ENCODE measurements at regions of chr6 and their contacts with region 1.

Region 1: DNA sequence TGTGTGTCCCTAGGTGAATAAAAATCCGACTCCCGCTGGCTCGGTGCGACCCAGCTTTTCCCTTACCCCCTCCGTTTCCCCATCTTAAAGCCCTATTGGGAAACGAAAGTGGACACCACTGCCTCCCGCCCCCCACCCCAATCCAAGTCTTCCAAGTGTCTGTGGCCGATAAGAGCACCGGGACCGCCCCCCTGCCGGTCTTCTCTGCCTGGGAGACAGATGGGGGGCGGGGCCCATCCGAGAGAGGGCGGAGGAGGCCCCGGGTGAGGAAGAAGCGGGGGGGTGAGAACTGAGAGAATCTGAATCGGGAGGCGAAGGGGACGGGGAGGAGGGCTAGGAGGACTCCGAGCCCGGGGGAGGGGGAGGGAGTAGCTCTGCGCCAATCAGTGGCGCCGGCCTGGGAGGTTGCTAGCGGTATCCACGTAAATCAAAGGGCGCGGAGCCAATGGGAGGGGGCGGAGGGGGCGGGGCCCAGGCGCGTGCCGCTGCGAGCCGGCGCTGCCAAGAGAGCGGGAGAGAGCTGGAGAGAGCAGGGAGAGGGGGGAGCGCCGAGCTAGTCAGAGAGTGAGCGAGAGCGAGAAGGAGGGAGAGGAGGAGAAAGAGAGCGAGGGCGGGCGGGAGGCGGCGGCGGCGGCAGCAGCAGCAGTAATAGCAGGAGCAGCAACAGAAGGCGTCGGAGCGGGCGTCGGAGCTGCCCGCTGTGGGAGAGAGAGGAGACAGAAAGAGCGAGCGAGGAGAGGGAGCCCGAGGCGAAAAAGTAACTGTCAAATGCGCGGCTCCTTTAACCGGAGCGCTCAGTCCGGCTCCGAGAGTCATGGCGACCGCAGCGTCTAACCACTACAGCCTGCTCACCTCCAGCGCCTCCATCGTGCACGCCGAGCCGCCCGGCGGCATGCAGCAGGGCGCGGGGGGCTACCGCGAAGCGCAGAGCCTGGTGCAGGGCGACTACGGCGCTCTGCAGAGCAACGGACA is at the start of gene POU3F2:
- DNase-seq: peak; percentile 87 to 92 (median 87)
- H3K4me3 ChIP-seq: peak within 1 kb of the TSS; percentile 58
- H3K27ac ChIP-seq: peak within 1 kb of the TSS in 1 of 2 donors; percentile 30
- H3K4me1 ChIP-seq: peaks cover 12% of the 10 kb centered on the region
- H3K27me3 ChIP-seq: peaks cover 6% of the 10 kb centered on the region
- CTCF ChIP-seq: no peak
- EP300 ChIP-seq: no peak
- POLR2A ChIP-seq: no peak
- total RNA-seq, gene POU3F2: not detected

Region 2: DNA sequence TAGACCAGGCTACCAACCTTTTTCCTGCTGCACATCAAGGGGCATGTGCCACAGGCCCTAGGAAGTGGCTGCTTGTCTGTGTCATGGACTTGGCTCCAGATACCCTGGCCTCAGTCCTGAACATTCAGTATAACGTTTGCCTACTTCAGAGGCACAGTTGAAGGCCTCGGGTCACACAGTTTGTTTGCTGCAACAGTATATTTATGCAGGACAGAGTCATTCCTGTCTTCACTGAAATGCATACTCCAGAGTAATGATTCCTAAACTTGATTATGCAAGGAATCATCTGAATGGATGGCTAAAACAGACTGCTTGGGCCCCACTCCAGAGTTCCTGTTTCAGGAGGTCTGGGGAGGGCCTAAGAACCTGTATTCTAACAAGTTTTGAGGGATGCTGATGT is 1760.4 kb before region 1 on chr6:
- intact Hi-C with region 1: loop called in 1 of 4 experiments (anchors 5 kb)
- DNase-seq: no peak
- H3K4me3 ChIP-seq: no peak overlapping the region
- H3K27ac ChIP-seq: no peak overlapping the region
- H3K4me1 ChIP-seq: no peaks in the 10 kb centered on the region
- H3K27me3 ChIP-seq: no peaks in the 10 kb centered on the region
- CTCF ChIP-seq: no peak
- EP300 ChIP-seq: no peak
- POLR2A ChIP-seq: no peak

Region 3: GRCh38 chr6:97497713-97498331 is 1336.5 kb before region 1 on chr6:
- intact Hi-C with region 1: loop called in 1 of 4 experiments (anchors 10 kb)
- DNase-seq: peak in 4 of 5 donors; percentile 16 to 60 (median 20)
- H3K4me3 ChIP-seq: no peak overlapping the region
- H3K27ac ChIP-seq: no peak overlapping the region
- H3K4me1 ChIP-seq: no peaks in the 10 kb centered on the region
- H3K27me3 ChIP-seq: no peaks in the 10 kb centered on the region
- CTCF ChIP-seq: no peak
- EP300 ChIP-seq: no peak
- POLR2A ChIP-seq: no peak

Region 4: DNA sequence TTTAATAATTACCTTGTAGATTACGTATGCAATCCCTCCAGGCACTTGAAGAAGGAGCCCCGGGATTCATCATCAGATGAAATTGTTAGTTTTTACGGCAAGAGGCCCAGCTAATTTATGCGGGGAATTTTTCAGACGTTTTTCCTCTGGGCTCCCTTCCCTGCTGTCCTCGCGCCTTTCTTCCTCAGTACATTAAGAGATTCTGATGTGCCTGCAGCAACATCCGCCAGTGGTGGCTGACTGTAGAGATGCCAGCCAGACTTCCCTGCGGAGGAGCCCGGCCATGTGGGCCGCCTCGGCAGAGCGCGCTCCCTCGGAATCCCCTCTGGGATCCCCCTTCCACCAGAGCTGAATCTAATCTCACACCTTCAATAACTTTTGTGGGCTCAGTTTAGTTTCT is 46.4 kb before region 1 on chr6:
- intact Hi-C with region 1: no loop called
- DNase-seq: no peak
- H3K4me3 ChIP-seq: no peak overlapping the region
- H3K27ac ChIP-seq: no peak overlapping the region
- H3K4me1 ChIP-seq: no peaks in the 10 kb centered on the region
- H3K27me3 ChIP-seq: no peaks in the 10 kb centered on the region
- CTCF ChIP-seq: no peak
- EP300 ChIP-seq: no peak
- POLR2A ChIP-seq: no peak

Region 5: DNA sequence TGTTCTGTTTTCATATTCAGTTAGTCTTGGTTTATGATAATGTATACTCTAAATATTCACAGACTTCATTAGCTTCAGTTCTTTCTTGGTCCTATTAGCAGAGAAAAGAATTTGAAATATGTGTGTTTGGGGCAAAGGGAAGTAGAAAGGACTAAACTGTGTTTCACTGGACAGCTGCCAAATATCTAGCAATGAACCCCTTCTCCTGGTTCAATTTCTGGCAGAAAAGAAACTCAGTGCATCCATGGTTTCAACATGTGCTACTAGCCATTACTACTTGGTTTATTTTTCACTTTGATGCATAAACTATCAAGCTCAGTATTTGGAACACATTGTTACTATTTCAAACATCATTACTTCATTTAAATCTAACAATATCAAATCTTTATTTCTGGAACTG is 69.8 kb after region 1 on chr6:
- intact Hi-C with region 1: no loop called
- DNase-seq: no peak
- H3K4me3 ChIP-seq: no peak overlapping the region
- H3K27ac ChIP-seq: no peak overlapping the region
- H3K4me1 ChIP-seq: no peaks in the 10 kb centered on the region
- H3K27me3 ChIP-seq: no peaks in the 10 kb centered on the region
- CTCF ChIP-seq: no peak
- EP300 ChIP-seq: no peak
- POLR2A ChIP-seq: no peak

Measured in ovary (tissue), 10 donors.